Gastrocnemius medialis (tissue), 4 donors: ENCODE measurements at regions of chr2 and their contacts with region 1.

Region 1: DNA sequence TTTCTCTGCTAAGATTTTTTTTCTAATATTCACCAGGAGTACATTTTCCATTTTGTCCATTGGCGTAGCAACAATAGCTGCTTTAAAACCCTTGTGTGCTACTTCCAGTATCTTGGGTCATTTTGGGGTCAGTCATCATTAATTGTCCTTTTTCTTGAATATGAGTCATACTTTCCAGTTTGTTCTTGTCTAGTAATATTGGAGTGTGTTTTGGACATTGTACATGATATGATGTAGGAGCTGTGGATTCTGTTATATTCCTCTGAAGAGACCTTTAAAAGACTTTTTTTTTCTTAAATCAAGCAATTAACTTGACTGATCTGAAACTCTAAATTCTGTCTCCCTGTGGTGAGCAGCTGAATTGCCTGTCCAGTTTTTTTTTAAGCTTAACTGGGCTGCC is 40.8 kb downstream of the AGPS start:
- DNase-seq: no peak
- ATAC-seq: no peak
- H3K4me3 ChIP-seq: peak overlapping the region in 1 of 4 donors; percentile 3
- H3K27ac ChIP-seq: no peak overlapping the region
- H3K4me1 ChIP-seq: peaks cover 2 to 5% of the 10 kb centered on the region in 2 donors
- H3K27me3 ChIP-seq: no peaks in the 10 kb centered on the region
- CTCF ChIP-seq: no peak
- POLR2A ChIP-seq: no peak

Region 2: DNA sequence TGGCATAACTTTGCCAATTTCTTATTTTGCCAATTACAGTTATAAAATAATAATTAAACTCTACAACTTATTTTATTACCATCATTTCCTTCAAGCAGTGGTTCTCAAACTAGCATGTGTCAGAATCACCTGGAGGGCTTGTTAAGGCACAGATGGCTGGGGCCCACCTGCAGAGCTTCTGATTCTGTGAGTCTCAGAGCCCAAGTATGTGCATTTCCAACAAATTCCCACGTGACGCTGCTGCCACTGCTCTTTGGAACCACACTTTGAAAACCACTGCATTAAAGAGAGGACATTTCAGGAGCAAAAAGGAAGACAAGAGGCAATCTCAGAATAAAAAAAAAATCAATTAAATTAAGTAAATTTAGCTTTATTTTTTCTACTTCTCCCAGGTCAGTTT is 314.8 kb before region 1 on chr2:
- in situ Hi-C with region 1: no loop called
- intact Hi-C with region 1: no loop called
- DNase-seq: no peak
- ATAC-seq: no peak
- H3K4me3 ChIP-seq: no peak overlapping the region
- H3K27ac ChIP-seq: no peak overlapping the region
- H3K4me1 ChIP-seq: no peaks in the 10 kb centered on the region
- H3K27me3 ChIP-seq: no peaks in the 10 kb centered on the region
- CTCF ChIP-seq: no peak
- POLR2A ChIP-seq: no peak

Region 3: DNA sequence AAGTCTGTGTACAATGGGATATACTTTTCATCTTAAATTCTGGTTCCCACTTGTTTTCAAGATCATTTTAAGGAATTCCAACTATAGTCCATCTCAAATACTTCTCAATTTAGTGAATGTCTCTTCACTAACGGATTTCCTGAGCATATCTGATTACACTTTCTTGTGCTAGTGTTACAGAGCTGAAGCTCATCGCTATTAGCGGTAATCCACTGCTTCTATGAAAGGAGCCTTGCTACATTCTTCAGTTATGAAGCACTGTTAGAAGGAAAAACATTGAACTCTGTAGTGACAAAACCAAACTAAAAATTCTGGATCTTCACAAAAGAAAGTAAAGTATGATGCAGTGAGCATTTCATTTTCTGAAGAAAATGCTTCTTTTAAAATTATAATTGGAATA is 31.1 kb after region 1 on chr2:
- in situ Hi-C with region 1: no loop called
- intact Hi-C with region 1: loop called (anchors 2 kb)
- DNase-seq: no peak
- ATAC-seq: no peak
- H3K4me3 ChIP-seq: no peak overlapping the region
- H3K27ac ChIP-seq: no peak overlapping the region
- H3K4me1 ChIP-seq: peaks cover 0 to 9% of the 10 kb centered on the region in 2 donors
- H3K27me3 ChIP-seq: no peaks in the 10 kb centered on the region
- CTCF ChIP-seq: no peak
- POLR2A ChIP-seq: no peak

Region 4: GRCh38 chr2:177543007-177543760 is 109.8 kb after region 1 on chr2:
- in situ Hi-C with region 1: no loop called
- intact Hi-C with region 1: no loop called
- DNase-seq: no peak
- ATAC-seq: no peak
- H3K4me3 ChIP-seq: no peak overlapping the region
- H3K27ac ChIP-seq: no peak overlapping the region
- H3K4me1 ChIP-seq: no peaks in the 10 kb centered on the region
- H3K27me3 ChIP-seq: no peaks in the 10 kb centered on the region
- CTCF ChIP-seq: no peak
- POLR2A ChIP-seq: no peak